Activated CD4-positive, alpha-beta memory T cell treated with anti-CD3 and anti-CD28 coated beads, Interleukin-2, amount 10 ng/mL, durations not matched to agents 7 days and 5 days (primary cell): ENCODE measurements at regions of chr21 and their contacts with region 1.

Region 1: DNA sequence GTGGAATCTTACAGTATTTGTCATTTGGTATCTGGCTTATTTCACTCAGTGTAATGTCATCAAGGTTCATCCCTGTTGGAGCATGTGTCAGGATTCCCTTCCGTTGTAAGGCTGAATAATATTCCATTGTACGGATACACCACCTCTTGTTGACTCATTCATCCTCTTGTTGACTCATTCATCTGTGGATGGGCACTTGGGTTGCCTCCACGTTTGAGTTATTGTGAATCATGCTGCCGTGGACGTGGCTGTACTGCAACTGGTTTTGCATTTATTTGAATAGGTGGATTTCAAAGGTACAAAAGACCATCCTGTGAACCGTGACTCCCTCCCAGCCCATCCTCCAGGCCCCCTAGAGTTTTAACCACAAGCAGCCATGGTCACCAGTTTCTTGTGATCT is 11.9 kb upstream of the TCP10L start:
- DNase-seq: no peak
- H3K4me3 Mint-ChIP-seq: no peak overlapping the region
- H3K27ac Mint-ChIP-seq: no peak overlapping the region
- H3K4me1 Mint-ChIP-seq: peaks cover 11% of the 10 kb centered on the region
- H3K27me3 Mint-ChIP-seq: no peaks in the 10 kb centered on the region

Region 2: GRCh38 chr21:32276671-32277070 is 320.5 kb before region 1 on chr21:
- CTCF ChIA-PET with region 1: interaction called, 13 read pairs
- POLR2A ChIA-PET with region 1: no interaction called
- DNase-seq: no peak
- H3K4me3 Mint-ChIP-seq: no peak overlapping the region
- H3K27ac Mint-ChIP-seq: no peak overlapping the region
- H3K4me1 Mint-ChIP-seq: peaks cover 34% of the 10 kb centered on the region
- H3K27me3 Mint-ChIP-seq: no peaks in the 10 kb centered on the region

Region 3: GRCh38 chr21:32392880-32393676 is 204.1 kb before region 1 on chr21 and contains the start of gene URB1:
- CTCF ChIA-PET with region 1: interaction called, 12 read pairs
- POLR2A ChIA-PET with region 1: interaction called, 4 read pairs
- DNase-seq: peak; percentile 94
- H3K4me3 Mint-ChIP-seq: peak within 1 kb of the TSS; percentile 79
- H3K27ac Mint-ChIP-seq: peak within 1 kb of the TSS; percentile 73
- H3K4me1 Mint-ChIP-seq: peaks cover 42% of the 10 kb centered on the region
- H3K27me3 Mint-ChIP-seq: peaks cover 2% of the 10 kb centered on the region
- total RNA-seq, gene URB1: 9.1 TPM

Region 4: GRCh38 chr21:32403201-32403777 is 193.9 kb before region 1 on chr21:
- CTCF ChIA-PET with region 1: interaction called, 50 read pairs
- POLR2A ChIA-PET with region 1: no interaction called
- DNase-seq: peak; percentile 55
- H3K4me3 Mint-ChIP-seq: no peak overlapping the region
- H3K27ac Mint-ChIP-seq: no peak overlapping the region
- H3K4me1 Mint-ChIP-seq: peaks cover 9% of the 10 kb centered on the region
- H3K27me3 Mint-ChIP-seq: peaks cover 7% of the 10 kb centered on the region

Region 5: GRCh38 chr21:32535612-32536011 is 61.6 kb before region 1 on chr21:
- CTCF ChIA-PET with region 1: no interaction called
- POLR2A ChIA-PET with region 1: no interaction called
- DNase-seq: no peak
- H3K4me3 Mint-ChIP-seq: no peak overlapping the region
- H3K27ac Mint-ChIP-seq: no peak overlapping the region
- H3K4me1 Mint-ChIP-seq: peaks cover 12% of the 10 kb centered on the region
- H3K27me3 Mint-ChIP-seq: no peaks in the 10 kb centered on the region

Region 6: GRCh38 chr21:32585042-32585710 is 12.0 kb before region 1 on chr21 and contains the start of gene TCP10L:
- CTCF ChIA-PET with region 1: interaction called, 10 read pairs
- POLR2A ChIA-PET with region 1: no interaction called
- DNase-seq: no peak
- H3K4me3 Mint-ChIP-seq: no peak within 1 kb of the TSS
- H3K27ac Mint-ChIP-seq: no peak within 1 kb of the TSS
- H3K4me1 Mint-ChIP-seq: peaks cover 4% of the 10 kb centered on the region
- H3K27me3 Mint-ChIP-seq: no peaks in the 10 kb centered on the region
- total RNA-seq, gene TCP10L: 0.53 to 0.95 TPM

Region 7: DNA sequence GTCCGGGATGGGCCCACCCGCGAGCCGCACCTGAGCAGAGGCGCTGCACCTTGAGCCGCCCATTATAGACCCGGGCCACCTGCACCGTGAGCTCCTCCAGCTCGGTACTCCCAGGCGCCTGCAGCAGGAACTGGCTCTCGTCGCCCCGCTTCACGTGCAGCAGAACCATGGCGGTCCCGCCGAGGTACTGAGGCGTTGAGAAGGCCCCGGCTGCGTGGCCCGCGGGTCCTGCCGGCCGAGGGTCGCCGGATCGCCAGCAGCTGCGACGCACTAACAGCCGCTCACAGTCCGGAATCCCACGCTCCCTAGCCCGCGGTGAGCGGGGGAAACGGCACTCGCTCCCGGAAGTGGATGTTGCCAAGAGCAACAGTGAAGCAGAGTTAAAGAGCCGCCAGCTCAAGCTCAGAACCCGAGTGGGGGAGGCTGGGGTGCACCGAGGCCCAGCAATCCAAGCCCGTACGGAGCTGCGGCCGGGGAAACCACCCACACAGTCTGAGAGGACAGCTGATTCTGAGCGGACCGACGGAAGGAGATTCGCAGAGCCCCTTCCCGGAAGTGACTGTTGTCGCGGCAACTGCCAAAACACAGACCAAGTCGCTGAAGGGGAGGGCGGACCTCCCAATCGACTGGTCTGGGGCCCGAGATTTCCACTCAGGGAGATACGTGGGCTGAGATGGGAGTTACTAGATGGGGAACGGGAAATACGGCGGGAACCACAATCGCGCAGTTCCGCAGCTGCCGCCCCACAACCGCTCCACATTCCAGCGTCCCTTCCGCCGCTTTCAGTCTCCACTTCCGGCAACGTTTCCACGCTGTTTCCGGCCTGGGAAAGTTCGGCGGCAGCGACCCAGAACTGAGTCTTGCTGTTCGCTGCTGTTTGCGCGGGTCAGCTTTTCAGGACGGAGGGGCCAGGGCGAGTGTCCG is 15.1 kb after region 1 on chr21 and contains the start of gene CFAP298:
- CTCF ChIA-PET with region 1: interaction called, 24 read pairs
- POLR2A ChIA-PET with region 1: interaction called, 9 read pairs
- DNase-seq: peak; percentile 90
- H3K4me3 Mint-ChIP-seq: peak within 1 kb of the TSS; percentile 93
- H3K27ac Mint-ChIP-seq: peak within 1 kb of the TSS; percentile 85
- H3K4me1 Mint-ChIP-seq: peaks cover 27% of the 10 kb centered on the region
- H3K27me3 Mint-ChIP-seq: peaks cover 3% of the 10 kb centered on the region
- total RNA-seq, gene CFAP298: 34.0 to 34.7 TPM

Region 8: DNA sequence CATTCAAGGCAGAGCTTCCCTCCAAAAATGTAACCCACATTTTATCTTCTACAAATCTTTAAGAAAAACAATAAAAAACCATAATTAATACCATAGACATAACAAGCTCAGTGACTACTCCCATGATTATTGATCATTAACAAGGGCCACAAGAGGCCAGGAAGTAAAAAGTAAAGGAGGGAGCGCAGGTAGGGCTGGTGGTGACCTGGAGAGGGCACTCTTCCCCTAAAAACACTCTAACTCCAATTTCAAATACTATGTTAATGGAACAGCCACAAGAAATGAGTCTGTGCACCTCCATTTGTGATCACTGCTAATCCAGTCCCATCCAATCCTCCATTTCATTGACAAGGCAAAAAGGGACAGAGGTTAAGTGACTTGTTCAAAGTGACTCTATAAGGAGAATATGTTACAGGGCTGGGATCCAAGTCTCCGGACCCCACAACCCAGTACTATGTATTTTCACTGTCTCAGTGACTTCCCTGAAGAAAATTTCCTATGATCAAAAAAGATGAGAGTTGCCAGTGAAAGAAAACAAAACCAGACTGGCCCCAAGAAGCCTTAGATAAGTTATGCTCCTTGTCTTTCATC is 56.2 kb after region 1 on chr21:
- CTCF ChIA-PET with region 1: interaction called, 12 read pairs
- POLR2A ChIA-PET with region 1: no interaction called
- DNase-seq: peak; percentile 38
- H3K4me3 Mint-ChIP-seq: no peak overlapping the region
- H3K27ac Mint-ChIP-seq: no peak overlapping the region
- H3K4me1 Mint-ChIP-seq: peaks cover 3% of the 10 kb centered on the region
- H3K27me3 Mint-ChIP-seq: no peaks in the 10 kb centered on the region